ENCODE measurements at regions of chr16 and their contacts with region 1.

Region 1: GRCh38 chr16:75208961-75209451 is 2.0 kb upstream of the CTRB2 start:
- DNase-seq: no peak
- H3K4me3 Mint-ChIP-seq: no peak overlapping the region
- H3K27ac Mint-ChIP-seq: no peak overlapping the region
- H3K4me1 Mint-ChIP-seq: no peaks in the 10 kb centered on the region
- H3K27me3 Mint-ChIP-seq: no peaks in the 10 kb centered on the region

Region 2: GRCh38 chr16:75224306-75225091 is 15.5 kb after region 1 on chr16:
- CTCF ChIA-PET with region 1: no interaction called
- POLR2A ChIA-PET with region 1: no interaction called
- DNase-seq: no peak
- H3K4me3 Mint-ChIP-seq: no peak overlapping the region
- H3K27ac Mint-ChIP-seq: no peak overlapping the region
- H3K4me1 Mint-ChIP-seq: peaks cover 12% of the 10 kb centered on the region
- H3K27me3 Mint-ChIP-seq: no peaks in the 10 kb centered on the region

Region 3: GRCh38 chr16:75234856-75235696 is 26.1 kb after region 1 on chr16:
- CTCF ChIA-PET with region 1: interaction called, 10 read pairs
- POLR2A ChIA-PET with region 1: no interaction called
- DNase-seq: no peak
- H3K4me3 Mint-ChIP-seq: no peak overlapping the region
- H3K27ac Mint-ChIP-seq: no peak overlapping the region
- H3K4me1 Mint-ChIP-seq: peaks cover 1% of the 10 kb centered on the region
- H3K27me3 Mint-ChIP-seq: peaks cover 3% of the 10 kb centered on the region

Region 4: GRCh38 chr16:75372236-75372856 is 163.3 kb after region 1 on chr16:
- CTCF ChIA-PET with region 1: no interaction called
- POLR2A ChIA-PET with region 1: no interaction called
- DNase-seq: no peak
- H3K4me3 Mint-ChIP-seq: no peak overlapping the region
- H3K27ac Mint-ChIP-seq: no peak overlapping the region
- H3K4me1 Mint-ChIP-seq: no peaks in the 10 kb centered on the region
- H3K27me3 Mint-ChIP-seq: peaks cover 8% of the 10 kb centered on the region

Measured in activated CD4-positive, alpha-beta T cell treated with anti-CD3 and anti-CD28 coated beads, Interleukin-2, amount 10 ng/mL, durations not matched to agents 7 days and 5 days (primary cell).